Colonic mucosa (tissue), 4 donors: ENCODE measurements at regions of chr1 and their contacts with region 1.

Region 1: GRCh38 chr1:156225677-156226014 is 12.8 kb downstream of the PMF1 start:
- DNase-seq: no peak
- H3K4me3 ChIP-seq: no peak overlapping the region
- H3K27ac ChIP-seq: no peak overlapping the region
- H3K4me1 ChIP-seq: no peaks in the 10 kb centered on the region
- H3K27me3 ChIP-seq: no peaks in the 10 kb centered on the region
- CTCF ChIP-seq: no peak

Region 2: GRCh38 chr1:156090822-156091188 is 134.8 kb before region 1 on chr1:
- intact Hi-C with region 1: loop called (anchors 1 kb)
- DNase-seq: peak; percentile 92
- H3K4me3 ChIP-seq: no peak overlapping the region
- H3K27ac ChIP-seq: no peak overlapping the region
- H3K4me1 ChIP-seq: no peaks in the 10 kb centered on the region
- H3K27me3 ChIP-seq: no peaks in the 10 kb centered on the region
- CTCF ChIP-seq: peak; percentile 83

Region 3: GRCh38 chr1:156146020-156146768 is 79.5 kb before region 1 on chr1:
- intact Hi-C with region 1: loop called (anchors 2 kb)
- DNase-seq: no peak
- H3K4me3 ChIP-seq: no peak overlapping the region
- H3K27ac ChIP-seq: no peak overlapping the region
- H3K4me1 ChIP-seq: peaks cover 4% of the 10 kb centered on the region
- H3K27me3 ChIP-seq: no peaks in the 10 kb centered on the region
- CTCF ChIP-seq: peak; percentile 52